Activated B cell treated with CpG ODN at 0.5 μM for 24 hours (primary cell): ENCODE measurements at regions of chr14 and their contacts with region 1.

Region 1: GRCh38 chr14:22386924-22387775 is 201.9 kb downstream of the DAD1 start:
- DNase-seq: peak; percentile 46
- ATAC-seq: peak; percentile 15
- H3K4me3 Mint-ChIP-seq: peak overlapping the region; percentile 24
- H3K27ac Mint-ChIP-seq: peak overlapping the region; percentile 98
- H3K4me1 Mint-ChIP-seq: peaks cover 78% of the 10 kb centered on the region
- H3K27me3 Mint-ChIP-seq: no peaks in the 10 kb centered on the region
- CTCF ChIP-seq: peak; percentile 18

Region 2: GRCh38 chr14:22147704-22148103 is 239.4 kb before region 1 on chr14:
- CTCF ChIA-PET with region 1: no interaction called
- POLR2A ChIA-PET with region 1: no interaction called
- intact Hi-C with region 1: no loop called
- DNase-seq: no peak
- ATAC-seq: no peak
- H3K4me3 Mint-ChIP-seq: no peak overlapping the region
- H3K27ac Mint-ChIP-seq: no peak overlapping the region
- H3K4me1 Mint-ChIP-seq: no peaks in the 10 kb centered on the region
- H3K27me3 Mint-ChIP-seq: peaks cover 35% of the 10 kb centered on the region
- CTCF ChIP-seq: no peak

Region 3: GRCh38 chr14:22226381-22226780 is 160.8 kb before region 1 on chr14:
- CTCF ChIA-PET with region 1: interaction called, 3 read pairs
- POLR2A ChIA-PET with region 1: interaction called, 5 read pairs
- intact Hi-C with region 1: loop called (anchors 2 kb)
- DNase-seq: no peak
- ATAC-seq: peak; percentile 85
- H3K4me3 Mint-ChIP-seq: peak overlapping the region; percentile 64
- H3K27ac Mint-ChIP-seq: peak overlapping the region; percentile 81
- H3K4me1 Mint-ChIP-seq: peaks cover 53% of the 10 kb centered on the region
- H3K27me3 Mint-ChIP-seq: peaks cover 8% of the 10 kb centered on the region
- CTCF ChIP-seq: no peak

Region 4: DNA sequence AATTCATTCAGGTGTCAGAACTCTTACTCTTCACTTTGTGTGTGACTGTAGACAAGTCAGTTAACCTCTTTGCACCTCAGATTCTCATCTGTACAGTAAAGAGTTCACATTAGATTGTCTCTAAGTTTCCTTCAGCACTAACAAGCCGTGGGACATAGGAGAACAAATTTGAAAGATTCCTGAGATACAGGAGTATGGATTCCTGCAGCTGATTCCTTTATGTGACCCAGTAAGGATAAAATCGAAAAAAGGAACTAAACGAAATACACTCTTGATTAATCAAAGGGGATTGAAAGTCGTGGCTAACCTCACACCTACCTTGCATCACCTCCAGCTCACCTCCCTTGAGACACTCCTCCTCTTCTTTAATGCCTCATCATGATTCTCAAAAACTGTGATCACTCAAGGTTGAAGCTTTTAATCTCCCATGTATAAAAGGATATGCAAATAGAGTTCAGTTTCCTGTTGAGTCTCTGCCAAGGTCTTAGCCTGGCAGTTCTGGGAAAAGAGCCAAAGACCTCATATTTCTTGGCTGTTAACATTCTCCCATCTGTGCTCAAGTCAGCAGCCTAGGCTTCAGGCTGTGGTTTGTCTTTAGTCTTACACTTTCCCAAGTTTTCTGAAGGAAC is 45.3 kb after region 1 on chr14:
- CTCF ChIA-PET with region 1: interaction called, 7 read pairs
- POLR2A ChIA-PET with region 1: interaction called, 10 read pairs
- intact Hi-C with region 1: loop called (anchors 2 kb)
- DNase-seq: no peak
- ATAC-seq: peak; percentile 89
- H3K4me3 Mint-ChIP-seq: peak overlapping the region; percentile 17
- H3K27ac Mint-ChIP-seq: peak overlapping the region; percentile 32
- H3K4me1 Mint-ChIP-seq: peaks cover 43% of the 10 kb centered on the region
- H3K27me3 Mint-ChIP-seq: peaks cover 14% of the 10 kb centered on the region
- CTCF ChIP-seq: no peak

Region 5: DNA sequence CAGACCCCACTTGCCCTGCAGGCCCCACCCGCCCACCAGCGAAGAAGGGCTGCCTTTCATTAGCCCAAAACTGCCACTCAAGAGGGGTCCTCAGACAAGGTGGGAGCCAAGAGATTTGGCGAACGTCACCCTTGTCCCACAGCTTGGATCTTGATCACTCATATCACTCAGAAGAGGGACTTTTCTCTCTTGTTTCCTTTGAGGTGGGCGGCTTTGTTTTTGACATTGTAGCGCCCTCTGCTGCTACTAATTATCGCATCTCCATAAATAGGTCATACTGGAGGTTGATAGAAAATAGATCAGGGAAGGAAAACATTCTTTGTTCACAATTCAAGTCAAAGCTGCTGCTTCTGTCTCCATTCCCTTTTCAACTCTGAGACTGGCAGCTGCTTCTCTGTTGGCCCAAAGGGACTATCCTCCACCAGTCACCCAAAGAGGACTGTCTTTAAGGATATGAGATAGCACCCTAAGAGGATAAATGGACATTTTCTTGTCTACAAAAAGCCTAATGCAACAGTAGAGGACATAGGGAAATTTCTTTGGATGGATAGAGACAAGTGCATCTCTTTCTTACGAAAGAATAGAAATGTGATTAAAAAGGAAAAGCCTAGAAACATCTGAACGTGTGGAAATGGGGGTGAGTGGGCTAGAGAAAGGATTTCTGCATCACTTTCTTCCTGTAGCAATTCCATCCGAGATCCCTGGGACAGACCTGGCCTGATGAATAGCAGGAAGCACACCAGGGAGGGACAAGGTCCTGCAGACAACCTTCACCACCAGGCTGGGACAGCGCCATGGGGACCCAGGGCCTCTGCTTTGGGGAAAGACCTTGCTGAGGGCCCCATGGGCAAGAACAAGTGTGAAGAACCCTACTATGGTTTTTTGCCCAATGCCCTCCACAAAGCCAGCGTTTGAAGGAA is 86.0 kb after region 1 on chr14:
- CTCF ChIA-PET with region 1: interaction called, 103 read pairs
- POLR2A ChIA-PET with region 1: interaction called, 7 read pairs
- intact Hi-C with region 1: loop called (anchors 1 kb)
- DNase-seq: no peak
- ATAC-seq: peak; percentile 64
- H3K4me3 Mint-ChIP-seq: peak overlapping the region; percentile 3
- H3K27ac Mint-ChIP-seq: peak overlapping the region; percentile 65
- H3K4me1 Mint-ChIP-seq: peaks cover 89% of the 10 kb centered on the region
- H3K27me3 Mint-ChIP-seq: no peaks in the 10 kb centered on the region
- CTCF ChIP-seq: peak; percentile 40

Region 6: GRCh38 chr14:22653012-22653621 is 266.0 kb after region 1 on chr14:
- CTCF ChIA-PET with region 1: interaction called, 4 read pairs
- POLR2A ChIA-PET with region 1: no interaction called
- intact Hi-C with region 1: loop called (anchors 1 kb)
- DNase-seq: no peak
- ATAC-seq: peak; percentile 78
- H3K4me3 Mint-ChIP-seq: no peak overlapping the region
- H3K27ac Mint-ChIP-seq: no peak overlapping the region
- H3K4me1 Mint-ChIP-seq: no peaks in the 10 kb centered on the region
- H3K27me3 Mint-ChIP-seq: no peaks in the 10 kb centered on the region
- CTCF ChIP-seq: no peak

Region 7: GRCh38 chr14:22886500-22887259 is 499.5 kb after region 1 on chr14:
- CTCF ChIA-PET with region 1: no interaction called
- POLR2A ChIA-PET with region 1: no interaction called
- intact Hi-C with region 1: loop called (anchors 10 kb)
- DNase-seq: peak; percentile 71
- ATAC-seq: peak; percentile 55
- H3K4me3 Mint-ChIP-seq: peak overlapping the region; percentile 90
- H3K27ac Mint-ChIP-seq: peak overlapping the region; percentile 97
- H3K4me1 Mint-ChIP-seq: peaks cover 80% of the 10 kb centered on the region
- H3K27me3 Mint-ChIP-seq: no peaks in the 10 kb centered on the region
- CTCF ChIP-seq: no peak

Region 8: DNA sequence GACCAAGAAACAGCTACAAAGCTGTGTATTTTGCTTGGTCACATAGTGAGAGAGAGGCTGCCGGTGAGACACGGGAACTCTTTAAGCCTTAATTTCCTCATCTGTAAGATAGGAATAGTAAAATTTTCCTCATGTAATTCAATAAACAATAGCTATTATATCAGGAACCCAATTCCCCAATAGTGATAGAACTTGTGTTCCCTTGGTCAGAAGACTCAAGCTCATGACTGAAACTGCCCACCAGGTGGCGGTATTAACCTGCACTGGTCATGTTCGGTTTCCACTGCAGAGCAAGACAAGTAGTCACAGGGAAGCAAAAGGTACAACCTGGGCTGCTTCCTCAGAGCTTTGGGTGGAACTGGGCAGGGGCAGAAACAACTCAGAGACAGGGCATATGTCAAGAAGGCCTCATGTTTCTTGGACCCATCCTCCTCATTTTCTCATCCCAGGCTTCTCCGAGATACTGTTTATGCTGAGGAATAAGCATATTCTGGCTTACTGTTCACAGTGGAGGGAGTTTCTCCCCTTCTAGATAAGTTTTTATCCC is 599.4 kb after region 1 on chr14:
- CTCF ChIA-PET with region 1: interaction called, 8 read pairs
- POLR2A ChIA-PET with region 1: no interaction called
- intact Hi-C with region 1: loop called (anchors 1 kb)
- DNase-seq: peak; percentile 70
- ATAC-seq: peak; percentile 62
- H3K4me3 Mint-ChIP-seq: no peak overlapping the region
- H3K27ac Mint-ChIP-seq: no peak overlapping the region
- H3K4me1 Mint-ChIP-seq: no peaks in the 10 kb centered on the region
- H3K27me3 Mint-ChIP-seq: no peaks in the 10 kb centered on the region
- CTCF ChIP-seq: peak; percentile 91